Activated T-helper 1 cell treated with anti-CD3 and anti-CD28 coated beads, Interleukin-12 subunit alpha, Interleukin-12 subunit beta, Interleukin-2, Interleukin-4 antibody, amounts not matched to agents 30 ng/mL and 10 ng/mL and 1 ng/mL, durations not matched to agents 14 hours and 24 hours and 36 hours (primary cell): ENCODE measurements at regions of chr5 and their contacts with region 1.

Region 1: GRCh38 chr5:67209142-67209771 is 12.7 kb upstream of the CD180 start:
- DNase-seq: peak; percentile 62
- H3K4me3 Mint-ChIP-seq: peak overlapping the region; percentile 25
- H3K27ac Mint-ChIP-seq: no peak overlapping the region
- H3K4me1 Mint-ChIP-seq: peaks cover 59% of the 10 kb centered on the region
- H3K27me3 Mint-ChIP-seq: no peaks in the 10 kb centered on the region

Region 2: GRCh38 chr5:66144074-66144833 is 1065.0 kb before region 1 on chr5 and contains the start of gene SREK1:
- intact Hi-C with region 1: loop called (anchors 10 kb)
- DNase-seq: peak; percentile 84
- H3K4me3 Mint-ChIP-seq: peak within 1 kb of the TSS; percentile 96
- H3K27ac Mint-ChIP-seq: peak within 1 kb of the TSS; percentile 99
- H3K4me1 Mint-ChIP-seq: peaks cover 47% of the 10 kb centered on the region
- H3K27me3 Mint-ChIP-seq: peaks cover 2% of the 10 kb centered on the region
- total RNA-seq, gene SREK1: 72.0 and 76.7 TPM in 2 replicates

Region 3: GRCh38 chr5:66828548-66829357 is 380.5 kb before region 1 on chr5:
- intact Hi-C with region 1: loop called (anchors 1 kb)
- DNase-seq: peak; percentile 75
- H3K4me3 Mint-ChIP-seq: peak overlapping the region; percentile 94
- H3K27ac Mint-ChIP-seq: peak overlapping the region; percentile 96
- H3K4me1 Mint-ChIP-seq: peaks cover 90% of the 10 kb centered on the region
- H3K27me3 Mint-ChIP-seq: no peaks in the 10 kb centered on the region

Region 4: GRCh38 chr5:67003935-67004729 is 205.1 kb before region 1 on chr5:
- intact Hi-C with region 1: loop called (anchors 1 kb)
- DNase-seq: peak; percentile 81
- H3K4me3 Mint-ChIP-seq: peak overlapping the region; percentile 90
- H3K27ac Mint-ChIP-seq: peak overlapping the region; percentile 92
- H3K4me1 Mint-ChIP-seq: peaks cover 64% of the 10 kb centered on the region
- H3K27me3 Mint-ChIP-seq: no peaks in the 10 kb centered on the region

Region 5: DNA sequence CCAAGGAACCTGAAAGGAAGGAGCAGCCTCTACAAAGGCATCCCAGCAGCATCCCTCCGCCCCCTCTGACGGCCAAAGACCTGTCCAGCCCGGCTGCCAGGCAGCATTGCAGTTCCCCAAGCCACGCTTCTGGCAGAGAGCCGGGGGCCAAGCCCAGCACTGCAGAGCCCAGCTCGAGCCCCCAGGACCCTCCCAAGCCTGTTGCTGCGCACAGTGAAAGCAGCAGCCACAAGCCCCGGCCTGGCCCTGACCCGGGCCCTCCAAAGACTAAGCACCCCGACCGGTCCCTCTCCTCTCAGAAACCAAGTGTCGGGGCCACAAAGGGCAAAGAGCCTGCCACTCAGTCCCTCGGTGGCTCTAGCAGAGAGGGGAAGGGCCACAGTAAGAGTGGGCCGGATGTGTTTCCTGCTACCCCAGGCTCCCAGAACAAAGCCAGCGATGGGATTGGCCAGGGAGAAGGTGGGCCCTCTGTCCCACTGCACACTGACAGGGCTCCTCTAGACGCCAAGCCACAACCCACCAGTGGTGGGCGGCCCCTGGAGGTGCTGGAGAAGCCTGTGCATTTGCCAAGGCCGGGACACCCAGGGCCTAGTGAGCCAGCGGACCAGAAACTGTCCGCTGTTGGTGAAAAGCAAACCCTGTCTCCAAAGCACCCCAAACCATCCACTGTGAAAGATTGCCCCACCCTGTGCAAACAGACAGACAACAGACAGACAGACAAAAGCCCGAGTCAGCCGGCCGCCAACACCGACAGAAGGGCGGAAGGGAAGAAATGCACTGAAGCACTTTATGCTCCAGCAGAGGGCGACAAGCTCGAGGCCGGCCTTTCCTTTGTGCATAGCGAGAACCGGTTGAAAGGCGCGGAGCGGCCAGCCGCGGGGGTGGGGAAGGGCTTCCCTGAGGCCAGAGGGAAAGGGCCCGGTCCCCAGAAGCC is 43.5 kb before region 1 on chr5:
- intact Hi-C with region 1: loop called (anchors 1 kb)
- DNase-seq: peak; percentile 81
- H3K4me3 Mint-ChIP-seq: peak overlapping the region; percentile 91
- H3K27ac Mint-ChIP-seq: peak overlapping the region; percentile 94
- H3K4me1 Mint-ChIP-seq: peaks cover 79% of the 10 kb centered on the region
- H3K27me3 Mint-ChIP-seq: no peaks in the 10 kb centered on the region

Region 6: DNA sequence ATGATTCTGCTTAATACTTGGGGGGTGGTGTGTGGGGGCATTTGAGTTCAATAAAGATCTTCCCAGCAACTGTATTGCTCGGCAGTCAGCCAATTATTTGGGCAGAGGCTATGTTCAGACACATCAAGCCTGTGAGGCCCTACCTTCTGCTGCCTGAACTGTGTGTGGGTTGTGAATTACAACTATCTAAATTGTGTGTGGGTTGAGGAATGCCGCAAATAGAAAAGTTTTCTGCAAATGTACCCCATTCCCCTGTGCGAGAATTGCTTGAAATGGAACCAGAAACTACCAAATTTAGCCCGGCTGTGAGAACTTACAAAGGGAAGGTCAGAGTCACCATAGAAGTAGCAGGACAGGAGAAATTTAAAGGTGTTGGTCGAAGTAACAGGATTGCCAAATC is 646.3 kb after region 1 on chr5:
- intact Hi-C with region 1: no loop called
- DNase-seq: no peak
- H3K4me3 Mint-ChIP-seq: no peak overlapping the region
- H3K27ac Mint-ChIP-seq: no peak overlapping the region
- H3K4me1 Mint-ChIP-seq: no peaks in the 10 kb centered on the region
- H3K27me3 Mint-ChIP-seq: peaks cover 2% of the 10 kb centered on the region

Region 7: GRCh38 chr5:68215208-68215897 is 1006.1 kb after region 1 on chr5 and contains the start of gene PIK3R1:
- intact Hi-C with region 1: loop called (anchors 1 kb)
- DNase-seq: peak; percentile 88
- H3K4me3 Mint-ChIP-seq: peak within 1 kb of the TSS; percentile 91
- H3K27ac Mint-ChIP-seq: peak within 1 kb of the TSS; percentile 93
- H3K4me1 Mint-ChIP-seq: peaks cover 37% of the 10 kb centered on the region
- H3K27me3 Mint-ChIP-seq: no peaks in the 10 kb centered on the region
- total RNA-seq, gene PIK3R1: 43.3 and 46.2 TPM in 2 replicates